Activated T-helper 2 cell treated with anti-CD3 and anti-CD28 coated beads, Interferon-gamma antibody, Interleukin-2, Interleukin-4, amounts not matched to agents 10 μg/mL and 5 μg/mL and 100 μg/mL, durations not matched to agents 14 hours and 24 hours and 36 hours (primary cell): ENCODE measurements at regions of chr5 and their contacts with region 1.

Region 1: GRCh38 chr5:56328753-56329560 is 95.8 kb upstream of the ANKRD55 start:
- DNase-seq: peak; percentile 52
- H3K4me3 Mint-ChIP-seq: peak overlapping the region; percentile 58
- H3K27ac Mint-ChIP-seq: peak overlapping the region; percentile 89
- H3K4me1 Mint-ChIP-seq: peaks cover 60% of the 10 kb centered on the region
- H3K27me3 Mint-ChIP-seq: no peaks in the 10 kb centered on the region

Region 2: DNA sequence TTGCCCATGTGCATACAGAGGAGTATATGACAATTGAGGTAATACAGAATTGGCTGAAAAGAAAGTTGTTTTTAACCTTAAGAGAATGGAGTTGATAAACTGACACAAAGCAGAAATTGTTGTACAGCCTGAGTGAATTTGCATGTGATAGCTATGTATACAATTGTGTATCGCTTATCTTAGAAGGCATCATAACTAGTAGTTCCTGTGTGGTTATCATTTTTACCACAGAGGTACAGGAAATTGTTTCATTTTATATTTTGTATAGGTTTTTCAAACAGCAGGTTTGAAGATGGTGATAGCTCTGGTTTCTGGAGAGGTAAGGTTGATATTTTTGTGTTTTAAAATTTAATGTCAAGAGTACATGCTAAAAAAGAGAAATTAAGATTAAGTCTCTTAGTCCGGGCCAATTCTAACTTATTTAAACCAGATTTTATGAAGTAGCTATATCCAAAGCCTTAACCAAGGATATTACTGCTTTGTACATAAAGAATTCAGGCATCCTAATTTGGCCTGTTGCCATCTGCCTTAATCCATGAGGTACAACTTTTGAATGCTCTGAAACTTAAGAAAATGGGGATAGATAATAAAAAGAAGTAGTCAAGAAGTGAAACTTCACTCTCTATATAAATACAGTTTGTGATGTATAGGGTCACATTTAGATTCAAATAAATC is 565.1 kb before region 1 on chr5:
- intact Hi-C with region 1: loop called (anchors 5 kb)
- DNase-seq: no peak
- H3K4me3 Mint-ChIP-seq: peak overlapping the region; percentile 61
- H3K27ac Mint-ChIP-seq: peak overlapping the region; percentile 62
- H3K4me1 Mint-ChIP-seq: peaks cover 39% of the 10 kb centered on the region
- H3K27me3 Mint-ChIP-seq: no peaks in the 10 kb centered on the region

Region 3: DNA sequence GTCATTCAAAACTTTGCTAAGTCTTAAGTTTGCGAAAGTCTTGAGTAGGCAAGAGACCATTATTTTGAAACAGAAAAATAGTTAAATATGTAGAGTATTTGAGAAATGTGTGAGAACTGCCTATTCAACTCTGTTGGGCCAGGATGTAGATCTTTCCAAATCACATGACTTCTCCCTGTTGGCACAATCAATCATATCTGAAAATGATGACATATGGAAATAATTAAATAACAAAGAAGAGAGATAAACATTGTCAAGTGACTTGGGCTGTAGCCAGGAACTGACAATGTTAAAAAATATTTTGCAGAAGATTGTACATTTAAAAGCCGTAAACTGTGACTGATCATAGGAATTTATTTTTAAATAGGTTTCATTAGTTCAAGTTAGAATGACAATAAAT is 229.6 kb before region 1 on chr5:
- intact Hi-C with region 1: no loop called
- DNase-seq: no peak
- H3K4me3 Mint-ChIP-seq: no peak overlapping the region
- H3K27ac Mint-ChIP-seq: peak overlapping the region; percentile 7
- H3K4me1 Mint-ChIP-seq: peaks cover 50% of the 10 kb centered on the region
- H3K27me3 Mint-ChIP-seq: no peaks in the 10 kb centered on the region

Region 4: GRCh38 chr5:56126487-56127179 is 202.3 kb before region 1 on chr5:
- intact Hi-C with region 1: no loop called
- DNase-seq: no peak
- H3K4me3 Mint-ChIP-seq: peak overlapping the region; percentile 34
- H3K27ac Mint-ChIP-seq: peak overlapping the region; percentile 65
- H3K4me1 Mint-ChIP-seq: peaks cover 39% of the 10 kb centered on the region
- H3K27me3 Mint-ChIP-seq: no peaks in the 10 kb centered on the region

Region 5: DNA sequence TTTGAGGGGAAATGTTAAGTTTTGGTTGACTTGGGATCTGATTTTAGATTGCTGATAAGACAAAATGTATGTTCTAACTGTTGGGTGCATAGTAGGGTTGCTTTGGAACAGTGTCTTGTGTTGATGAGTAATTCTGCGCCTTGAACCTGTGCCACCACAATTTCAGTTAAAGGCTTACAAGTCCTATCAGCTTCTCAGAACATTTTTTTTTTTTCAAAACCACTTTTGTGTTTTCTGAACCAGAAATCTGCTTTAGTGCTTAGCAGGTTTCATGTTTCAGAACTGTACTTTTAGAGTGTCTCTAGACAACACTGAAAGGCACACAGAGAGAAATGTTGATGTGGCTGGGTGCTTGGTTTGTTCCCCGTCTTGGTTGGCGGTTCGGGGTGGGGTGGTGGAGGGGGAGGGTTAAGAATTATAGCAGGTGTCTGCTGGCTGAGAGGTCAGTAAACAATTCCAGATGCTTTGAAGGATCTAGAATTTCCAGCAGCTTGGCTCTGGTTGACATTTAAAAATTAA is 180.4 kb before region 1 on chr5:
- intact Hi-C with region 1: loop called (anchors 5 kb)
- DNase-seq: peak; percentile 59
- H3K4me3 Mint-ChIP-seq: no peak overlapping the region
- H3K27ac Mint-ChIP-seq: peak overlapping the region; percentile 54
- H3K4me1 Mint-ChIP-seq: peaks cover 54% of the 10 kb centered on the region
- H3K27me3 Mint-ChIP-seq: no peaks in the 10 kb centered on the region

Region 6: DNA sequence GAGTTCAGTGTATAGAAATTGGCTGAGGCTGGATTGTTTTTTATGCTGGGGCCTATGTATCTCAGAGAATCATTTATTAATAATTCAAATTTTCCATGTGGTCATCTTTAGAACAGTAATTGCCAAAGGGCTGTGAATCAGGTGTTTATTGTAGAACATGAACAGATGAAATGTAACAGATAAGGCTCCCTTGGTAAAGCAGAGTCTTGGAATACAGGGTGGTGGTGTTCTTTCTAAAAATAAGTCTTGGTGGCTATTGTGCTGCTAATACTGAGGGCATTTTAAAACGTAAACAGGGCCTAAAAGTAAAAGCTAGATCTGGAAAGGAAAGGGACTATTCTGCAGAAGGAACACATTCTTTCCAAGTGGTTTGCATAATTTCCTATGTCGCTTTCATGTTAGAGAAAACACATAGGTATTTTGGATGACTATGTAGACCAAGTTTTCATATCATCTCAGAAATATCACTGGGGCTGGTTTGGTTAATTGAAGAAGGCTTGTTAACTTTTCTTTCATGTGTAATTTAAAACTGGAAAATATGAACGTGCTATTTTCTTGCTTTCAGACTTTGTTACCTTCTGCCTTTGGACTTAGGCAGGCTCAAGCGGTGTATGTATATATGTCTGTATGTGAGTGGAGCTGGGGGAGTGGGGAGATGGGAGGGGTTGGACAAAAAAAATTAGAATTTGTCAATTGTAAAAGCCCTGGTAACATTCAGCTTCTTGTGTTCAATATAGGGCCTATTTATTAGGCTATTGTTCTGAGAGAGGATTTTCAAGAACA is 24.0 kb after region 1 on chr5:
- intact Hi-C with region 1: loop called (anchors 2 kb)
- DNase-seq: no peak
- H3K4me3 Mint-ChIP-seq: no peak overlapping the region
- H3K27ac Mint-ChIP-seq: peak overlapping the region; percentile 66
- H3K4me1 Mint-ChIP-seq: peaks cover 25% of the 10 kb centered on the region
- H3K27me3 Mint-ChIP-seq: no peaks in the 10 kb centered on the region

Region 7: DNA sequence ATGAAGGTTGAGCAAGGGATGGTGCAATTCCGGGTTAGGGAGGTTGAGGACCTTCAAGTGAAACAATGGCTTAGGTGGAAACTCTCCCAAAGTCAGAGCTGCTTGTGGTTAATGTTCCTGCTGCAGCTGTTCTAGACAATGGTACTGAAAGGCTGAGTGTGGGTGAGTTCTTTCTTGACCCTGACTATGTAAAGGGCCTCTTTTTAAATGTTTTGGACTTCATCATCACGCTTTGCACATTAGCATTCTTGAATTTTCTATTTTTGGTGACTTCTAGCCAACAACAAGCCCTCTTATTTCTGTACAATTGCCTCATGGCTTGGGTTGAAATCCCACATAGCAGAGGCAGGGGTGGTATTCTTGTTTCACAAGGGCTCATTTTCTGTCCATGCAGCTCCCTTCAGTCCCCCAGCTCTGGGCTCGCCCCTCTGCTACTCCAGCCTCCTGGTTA is 40.4 kb after region 1 on chr5:
- intact Hi-C with region 1: no loop called
- DNase-seq: no peak
- H3K4me3 Mint-ChIP-seq: no peak overlapping the region
- H3K27ac Mint-ChIP-seq: no peak overlapping the region
- H3K4me1 Mint-ChIP-seq: peaks cover 4% of the 10 kb centered on the region
- H3K27me3 Mint-ChIP-seq: no peaks in the 10 kb centered on the region

Region 8: GRCh38 chr5:56692359-56693219 is 363.6 kb after region 1 on chr5:
- intact Hi-C with region 1: loop called (anchors 2 kb)
- DNase-seq: no peak
- H3K4me3 Mint-ChIP-seq: peak overlapping the region; percentile 28
- H3K27ac Mint-ChIP-seq: peak overlapping the region; percentile 30
- H3K4me1 Mint-ChIP-seq: peaks cover 62% of the 10 kb centered on the region
- H3K27me3 Mint-ChIP-seq: no peaks in the 10 kb centered on the region

Region 9: DNA sequence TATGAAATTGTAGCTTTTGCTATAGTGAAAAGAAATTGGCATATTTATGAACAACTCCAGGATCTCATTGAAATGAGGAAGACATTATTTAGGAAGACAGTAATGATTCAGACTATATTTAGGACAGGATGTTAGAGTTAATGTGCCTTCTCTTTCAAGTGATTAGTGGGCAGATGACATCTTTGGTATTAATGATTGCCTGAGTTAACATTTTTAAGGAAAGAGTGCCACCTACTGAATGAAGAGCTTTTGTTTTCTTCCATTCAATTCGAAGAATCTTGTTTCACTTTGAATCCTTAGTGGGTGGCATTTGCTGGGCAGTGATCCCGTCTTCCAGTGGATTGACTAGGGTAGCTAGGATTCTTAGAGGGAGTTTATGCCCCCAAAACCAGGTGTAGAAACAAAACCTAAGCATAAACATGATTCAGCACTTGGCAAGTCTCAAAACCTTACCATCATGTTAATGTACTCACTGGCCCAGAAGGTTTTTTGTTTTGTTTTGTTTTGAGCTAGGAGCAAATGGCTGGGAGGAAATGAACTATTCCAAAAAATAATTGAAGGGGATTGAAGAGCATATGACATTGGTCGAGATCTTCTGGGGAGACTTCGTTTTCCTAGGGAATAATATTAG is 509.6 kb after region 1 on chr5:
- intact Hi-C with region 1: loop called (anchors 2 kb)
- DNase-seq: no peak
- H3K4me3 Mint-ChIP-seq: peak overlapping the region; percentile 49
- H3K27ac Mint-ChIP-seq: peak overlapping the region; percentile 56
- H3K4me1 Mint-ChIP-seq: peaks cover 56% of the 10 kb centered on the region
- H3K27me3 Mint-ChIP-seq: no peaks in the 10 kb centered on the region